OCI-LY7 (cell line): ENCODE measurements at regions of chr7 and their contacts with region 1.

Region 1: DNA sequence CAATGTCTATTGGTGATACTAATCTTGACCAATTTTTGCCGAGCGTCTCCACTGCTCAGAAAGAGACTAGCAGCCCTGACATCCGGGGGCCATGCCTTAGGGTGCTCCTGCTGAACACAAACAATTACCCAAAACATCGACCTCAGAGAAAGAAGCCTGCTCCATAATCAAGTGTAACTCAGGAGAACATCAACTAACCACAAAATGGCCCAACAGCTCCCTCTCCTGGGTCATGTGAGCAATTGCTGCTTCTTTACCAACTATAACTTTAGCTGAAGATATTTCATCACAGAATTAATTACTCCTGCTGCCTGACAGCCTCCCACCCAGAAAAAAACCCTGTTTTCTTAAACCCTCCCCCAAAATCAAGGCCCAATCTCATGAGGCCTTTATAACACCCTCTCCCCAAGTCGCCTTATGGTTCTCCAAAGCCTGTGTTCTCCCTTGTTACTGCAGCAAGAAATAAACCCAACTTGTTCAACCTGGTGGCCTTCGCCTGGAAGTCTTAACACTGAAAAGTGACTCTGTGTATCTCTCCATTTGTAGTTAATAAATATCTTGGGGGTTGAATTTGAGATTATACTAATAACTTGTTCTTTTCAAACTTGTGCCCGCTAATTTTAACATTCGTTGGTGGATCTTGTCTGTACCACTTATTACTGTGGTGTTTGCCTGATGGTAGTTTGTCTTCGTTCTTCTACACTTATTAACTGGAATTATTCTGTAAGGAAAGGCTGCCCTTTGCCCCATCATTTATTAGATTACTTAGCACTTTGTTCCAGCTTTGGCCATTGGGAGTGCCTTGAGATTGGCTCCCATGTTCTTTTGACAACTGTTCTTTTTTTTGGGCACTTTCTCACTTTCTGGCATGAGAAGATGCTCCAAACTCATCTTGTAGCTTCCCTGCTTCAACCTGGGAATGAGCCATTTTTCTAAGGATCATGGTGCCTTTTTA is 21.2 kb upstream of the RAMP3 start:
- DNase-seq: peak; percentile 84
- H3K4me3 ChIP-seq: no peak overlapping the region
- H3K27ac ChIP-seq: no peak overlapping the region
- H3K4me1 ChIP-seq: peaks cover 18% of the 10 kb centered on the region
- CTCF ChIP-seq: peak; percentile 98

Region 2: GRCh38 chr7:44587843-44588711 is 548.3 kb before region 1 on chr7:
- CTCF ChIA-PET with region 1: no interaction called
- POLR2A ChIA-PET with region 1: no interaction called
- intact Hi-C with region 1: loop called (anchors 2 kb)
- DNase-seq: peak; percentile 73
- H3K4me3 ChIP-seq: no peak overlapping the region
- H3K27ac ChIP-seq: no peak overlapping the region
- H3K4me1 ChIP-seq: peaks cover 9% of the 10 kb centered on the region
- CTCF ChIP-seq: peak; percentile 93

Region 3: GRCh38 chr7:44921607-44922359 is 214.6 kb before region 1 on chr7:
- CTCF ChIA-PET with region 1: interaction called, 3 read pairs
- POLR2A ChIA-PET with region 1: no interaction called
- intact Hi-C with region 1: loop called (anchors 1 kb)
- DNase-seq: peak; percentile 86
- H3K4me3 ChIP-seq: no peak overlapping the region
- H3K27ac ChIP-seq: no peak overlapping the region
- H3K4me1 ChIP-seq: no peaks in the 10 kb centered on the region
- CTCF ChIP-seq: peak; percentile 95

Region 4: DNA sequence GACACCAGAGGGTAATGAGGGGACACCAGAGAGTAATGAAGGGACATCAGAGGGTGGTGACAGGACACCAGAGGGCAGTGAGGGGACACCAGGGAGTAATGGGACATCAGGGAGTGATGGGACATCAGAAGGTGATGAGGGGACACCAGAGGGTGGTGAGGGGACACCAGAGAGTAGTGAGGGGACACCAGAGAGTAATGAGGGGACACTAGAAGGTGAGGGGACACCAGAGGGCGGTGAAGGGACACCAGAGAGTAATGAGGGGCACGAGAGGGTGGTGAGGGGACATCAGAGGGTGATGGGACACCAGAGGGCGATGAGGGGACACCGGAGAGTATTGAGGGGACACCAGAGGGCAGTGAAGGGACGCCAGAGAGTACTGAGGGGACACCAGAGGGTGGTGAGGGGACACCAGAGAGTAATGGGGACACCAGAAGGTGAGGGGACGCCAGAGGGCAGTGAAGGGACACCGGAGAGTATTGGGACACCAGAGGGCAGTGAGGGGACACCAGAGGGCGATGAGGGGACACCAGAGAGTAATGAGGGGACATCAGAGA is 58.2 kb before region 1 on chr7:
- CTCF ChIA-PET with region 1: no interaction called
- POLR2A ChIA-PET with region 1: no interaction called
- intact Hi-C with region 1: loop called (anchors 5 kb)
- DNase-seq: no peak
- H3K4me3 ChIP-seq: no peak overlapping the region
- H3K27ac ChIP-seq: no peak overlapping the region
- H3K4me1 ChIP-seq: no peaks in the 10 kb centered on the region
- CTCF ChIP-seq: no peak

Region 5: GRCh38 chr7:45117383-45117981 is 18.9 kb before region 1 on chr7:
- CTCF ChIA-PET with region 1: no interaction called
- POLR2A ChIA-PET with region 1: interaction called, 11 read pairs
- intact Hi-C with region 1: no loop called
- DNase-seq: no peak
- H3K4me3 ChIP-seq: no peak overlapping the region
- H3K27ac ChIP-seq: no peak overlapping the region
- H3K4me1 ChIP-seq: peaks cover 24% of the 10 kb centered on the region
- CTCF ChIP-seq: no peak

Region 6: GRCh38 chr7:45359776-45360175 is 223.4 kb after region 1 on chr7:
- CTCF ChIA-PET with region 1: no interaction called
- POLR2A ChIA-PET with region 1: no interaction called
- intact Hi-C with region 1: no loop called
- DNase-seq: no peak
- H3K4me3 ChIP-seq: no peak overlapping the region
- H3K27ac ChIP-seq: no peak overlapping the region
- H3K4me1 ChIP-seq: no peaks in the 10 kb centered on the region
- CTCF ChIP-seq: no peak